Activated T-helper 1 cell treated with anti-CD3 and anti-CD28 coated beads, Interleukin-12 subunit alpha, Interleukin-12 subunit beta, Interleukin-2, Interleukin-4 antibody, amounts not matched to agents 30 ng/mL and 10 ng/mL and 1 ng/mL, durations not matched to agents 14 hours and 24 hours and 36 hours (primary cell): ENCODE measurements at regions of chr7 and their contacts with region 1.

Region 1: DNA sequence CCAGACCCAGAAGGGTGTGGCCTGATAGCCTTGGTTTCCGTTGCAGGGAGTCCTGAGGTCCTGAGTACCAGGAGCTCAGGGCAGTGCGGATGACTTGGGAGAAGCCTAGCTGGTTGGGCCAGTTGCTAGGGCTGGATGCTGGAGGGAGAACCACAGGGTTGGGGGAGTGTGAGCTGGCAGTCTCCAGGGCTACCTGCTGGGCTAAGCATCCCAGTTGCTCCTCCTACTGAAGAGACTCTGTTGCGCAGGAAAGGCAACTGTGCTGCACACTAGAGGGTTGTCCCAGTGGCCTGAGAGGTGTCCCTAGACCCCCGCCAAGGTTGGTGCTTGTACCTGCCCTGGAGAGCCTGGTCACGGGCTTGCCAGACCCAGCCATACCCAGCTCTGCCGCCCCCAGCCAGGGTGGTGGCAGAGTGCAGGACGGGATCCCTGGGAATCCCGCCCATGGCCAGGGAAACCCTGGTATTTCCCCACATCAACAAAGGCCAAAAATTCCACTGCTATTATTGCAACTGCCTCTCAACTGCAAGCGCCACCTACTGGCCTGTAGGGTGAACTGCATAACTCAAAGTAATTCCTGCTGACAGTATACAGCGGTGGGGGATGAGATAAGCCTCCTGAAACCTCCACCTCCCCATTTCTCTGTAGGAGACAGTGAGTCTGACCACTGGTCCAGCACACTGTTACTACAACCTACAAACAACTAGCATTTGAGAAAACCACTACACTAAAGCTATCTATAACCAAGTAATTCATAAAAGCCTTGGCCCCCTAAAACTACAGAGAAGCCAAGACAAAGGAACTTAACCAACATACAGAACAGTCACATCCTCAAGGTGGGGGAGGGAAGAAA is 67.6 kb upstream of the DDC start:
- DNase-seq: peak; percentile 24
- H3K4me3 Mint-ChIP-seq: no peak overlapping the region
- H3K27ac Mint-ChIP-seq: no peak overlapping the region
- H3K4me1 Mint-ChIP-seq: peaks cover 4% of the 10 kb centered on the region
- H3K27me3 Mint-ChIP-seq: peaks cover 17% of the 10 kb centered on the region

Region 2: GRCh38 chr7:50567715-50568255 is 65.0 kb before region 1 on chr7:
- intact Hi-C with region 1: no loop called
- DNase-seq: no peak
- H3K4me3 Mint-ChIP-seq: no peak overlapping the region
- H3K27ac Mint-ChIP-seq: no peak overlapping the region
- H3K4me1 Mint-ChIP-seq: no peaks in the 10 kb centered on the region
- H3K27me3 Mint-ChIP-seq: peaks cover 3% of the 10 kb centered on the region

Region 3: DNA sequence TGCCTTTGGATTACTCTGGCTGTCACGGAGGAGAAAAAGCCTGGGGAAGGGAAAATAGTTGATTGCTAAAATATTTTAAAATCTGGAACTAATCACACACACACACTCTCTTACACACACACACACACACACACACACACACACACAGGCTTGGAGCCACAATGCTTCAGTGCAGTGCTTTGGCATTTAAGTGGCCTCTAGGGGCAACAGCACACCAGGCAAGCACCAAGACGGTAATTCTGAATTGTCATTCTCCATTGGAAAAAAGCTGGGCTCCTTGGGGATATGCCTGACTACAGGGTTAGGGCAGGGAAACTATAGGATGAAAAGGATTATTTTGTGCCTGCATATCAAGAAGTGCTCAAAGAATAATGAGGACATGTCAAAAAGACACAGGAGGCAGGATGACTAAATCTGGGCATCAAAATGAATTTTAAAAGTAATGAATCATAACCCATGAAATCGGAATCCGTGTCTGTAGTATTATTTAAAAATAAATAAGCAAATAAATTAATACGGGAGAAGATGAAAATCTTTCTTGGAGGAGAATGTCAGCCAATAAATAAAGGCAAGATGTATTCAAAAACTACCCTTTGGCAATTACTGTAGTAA is 37.2 kb before region 1 on chr7:
- intact Hi-C with region 1: loop called (anchors 5 kb)
- DNase-seq: no peak
- H3K4me3 Mint-ChIP-seq: no peak overlapping the region
- H3K27ac Mint-ChIP-seq: no peak overlapping the region
- H3K4me1 Mint-ChIP-seq: peaks cover 20% of the 10 kb centered on the region
- H3K27me3 Mint-ChIP-seq: peaks cover 15% of the 10 kb centered on the region

Region 4: DNA sequence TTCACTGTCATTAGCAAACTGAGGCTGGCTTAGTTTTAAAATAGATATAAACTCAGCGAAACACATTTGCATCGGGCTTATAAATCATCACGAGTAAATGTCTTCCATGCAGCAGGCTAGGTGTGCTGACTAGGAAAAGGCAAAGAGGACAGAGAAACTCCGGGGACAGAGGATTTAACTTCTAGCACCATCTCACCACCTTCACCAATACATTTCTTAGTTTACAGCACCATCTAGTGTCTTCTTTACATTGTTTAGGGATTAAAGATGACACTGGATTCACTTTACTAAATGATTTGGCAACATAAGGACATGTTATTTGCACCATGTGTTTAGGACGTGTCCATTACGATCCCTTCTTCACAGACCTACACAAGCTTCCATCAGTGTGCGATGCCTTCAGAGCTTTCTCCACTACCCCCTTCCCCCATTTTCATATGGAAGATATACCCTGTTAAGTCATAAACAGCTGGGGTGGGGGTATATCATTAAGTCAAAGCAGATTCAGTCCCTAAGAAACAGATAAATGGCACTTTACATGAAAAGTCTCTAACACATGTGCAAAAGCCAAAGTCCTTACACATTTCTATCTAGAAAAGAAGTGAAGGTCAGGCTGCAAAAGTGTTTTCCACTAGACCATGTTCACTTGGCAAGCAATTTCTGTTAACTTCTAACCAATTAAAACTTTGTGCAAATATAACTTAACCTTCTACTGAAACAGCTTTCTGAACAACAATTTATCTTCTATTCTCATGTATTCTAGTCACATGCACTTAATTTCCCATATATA is 46.6 kb after region 1 on chr7:
- intact Hi-C with region 1: loop called (anchors 5 kb)
- DNase-seq: no peak
- H3K4me3 Mint-ChIP-seq: no peak overlapping the region
- H3K27ac Mint-ChIP-seq: no peak overlapping the region
- H3K4me1 Mint-ChIP-seq: no peaks in the 10 kb centered on the region
- H3K27me3 Mint-ChIP-seq: peaks cover 11% of the 10 kb centered on the region